ENCODE measurements at regions of chr11 and their contacts with region 1.

Region 1: GRCh38 chr11:104968355-104968855 is at the start of gene CASP4:
- DNase-seq: peak in 4 of 5 donors; percentile 46 to 57 (median 55)
- H3K4me3 ChIP-seq: peak within 1 kb of the TSS; percentile 78 to 81
- H3K4me3 Mint-ChIP-seq: peak within 1 kb of the TSS; percentile 92 to 98 (median 95)
- H3K27ac ChIP-seq: peak within 1 kb of the TSS; percentile 82
- H3K27ac Mint-ChIP-seq: peak within 1 kb of the TSS; percentile 90 to 99 (median 98)
- H3K4me1 ChIP-seq: peaks cover 42% of the 10 kb centered on the region
- H3K4me1 Mint-ChIP-seq: peaks cover 29 to 43% (median 36%) of the 10 kb centered on the region in 4 donors
- H3K27me3 ChIP-seq: no peaks in the 10 kb centered on the region
- H3K27me3 Mint-ChIP-seq: no peaks in the 10 kb centered on the region
- total RNA-seq, gene CASP4: 97.9 to 98.4 TPM

Region 2: GRCh38 chr11:104897891-104898684 is 70.3 kb before region 1 on chr11 and contains the start of gene CASP12:
- CTCF ChIA-PET with region 1: no interaction called
- POLR2A ChIA-PET with region 1: interaction called, 11 read pairs
- intact Hi-C with region 1: no loop called
- DNase-seq: peak in 3 of 5 donors; percentile 18 to 37 (median 30)
- H3K4me3 ChIP-seq: peak within 1 kb of the TSS; percentile 5 to 8
- H3K4me3 Mint-ChIP-seq: peak within 1 kb of the TSS; percentile 75 to 89 (median 84)
- H3K27ac ChIP-seq: peak within 1 kb of the TSS; percentile 24
- H3K27ac Mint-ChIP-seq: peak within 1 kb of the TSS; percentile 67 to 96 (median 91)
- H3K4me1 ChIP-seq: peaks cover 34% of the 10 kb centered on the region
- H3K4me1 Mint-ChIP-seq: peaks cover 27 to 50% (median 39%) of the 10 kb centered on the region in 4 donors
- H3K27me3 ChIP-seq: no peaks in the 10 kb centered on the region
- H3K27me3 Mint-ChIP-seq: no peaks in the 10 kb centered on the region
- total RNA-seq, gene CASP12: not detected

Region 3: DNA sequence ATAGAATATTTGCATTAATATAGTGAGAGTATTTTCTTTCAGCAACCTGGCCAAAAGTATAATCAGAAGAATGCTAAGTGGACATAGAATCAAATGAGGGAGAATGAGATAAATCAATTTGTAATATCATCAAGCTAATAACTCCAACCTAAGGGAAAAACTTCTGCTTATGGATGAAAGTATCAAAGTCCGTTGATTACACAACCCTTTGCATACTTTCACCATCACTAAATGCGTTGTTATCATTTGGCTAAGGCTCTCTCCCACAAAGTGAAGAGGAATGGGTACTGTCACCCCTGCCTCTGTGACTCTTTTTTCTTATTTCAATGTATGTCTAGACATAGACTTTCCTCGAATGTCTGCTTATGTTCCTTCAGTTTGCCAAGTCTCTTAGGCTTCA is 16.4 kb after region 1 on chr11:
- CTCF ChIA-PET with region 1: no interaction called
- POLR2A ChIA-PET with region 1: no interaction called
- intact Hi-C with region 1: no loop called
- DNase-seq: no peak
- H3K4me3 ChIP-seq: no peak overlapping the region
- H3K4me3 Mint-ChIP-seq: no peak overlapping the region
- H3K27ac ChIP-seq: no peak overlapping the region
- H3K27ac Mint-ChIP-seq: no peak overlapping the region
- H3K4me1 ChIP-seq: no peaks in the 10 kb centered on the region
- H3K4me1 Mint-ChIP-seq: peaks cover 0 to 1% (median 0%) of the 10 kb centered on the region in 4 donors
- H3K27me3 ChIP-seq: no peaks in the 10 kb centered on the region
- H3K27me3 Mint-ChIP-seq: peaks cover 0 to 2% of the 10 kb centered on the region in 2 donors